MCF 10A (cell line): ENCODE measurements at regions of chr18 and their contacts with region 1.

Region 1: GRCh38 chr18:3380384-3380961 is 69.5 kb upstream of the TGIF1 start:
- DNase-seq: peak; percentile 74
- H3K4me3 Mint-ChIP-seq: no peak overlapping the region
- H3K27ac Mint-ChIP-seq: no peak overlapping the region
- H3K4me1 Mint-ChIP-seq: no peaks in the 10 kb centered on the region
- H3K27me3 Mint-ChIP-seq: no peaks in the 10 kb centered on the region
- CTCF ChIP-seq: peak; percentile 19

Region 2: DNA sequence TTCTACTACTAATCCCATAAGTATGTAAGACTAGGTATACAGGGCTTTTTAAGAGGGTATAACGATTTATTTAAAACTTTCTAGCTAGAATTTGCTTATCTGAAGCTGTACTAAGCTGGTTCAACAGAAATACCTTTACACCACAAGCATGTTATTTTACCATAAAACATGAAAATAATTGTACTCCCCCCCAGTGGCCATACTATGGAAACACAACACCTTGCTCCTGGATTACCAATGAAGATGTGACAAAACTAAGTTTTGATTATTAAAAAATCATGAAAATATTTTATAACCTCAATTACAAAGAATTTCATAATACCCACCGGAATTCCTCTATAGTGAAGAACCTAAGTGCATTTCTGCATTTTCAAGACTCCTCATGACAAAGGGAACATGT is 394.8 kb before region 1 on chr18:
- CTCF ChIA-PET with region 1: no interaction called
- POLR2A ChIA-PET with region 1: no interaction called
- intact Hi-C with region 1: no loop called
- DNase-seq: peak; percentile 52
- H3K4me3 Mint-ChIP-seq: no peak overlapping the region
- H3K27ac Mint-ChIP-seq: no peak overlapping the region
- H3K4me1 Mint-ChIP-seq: peaks cover 35% of the 10 kb centered on the region
- H3K27me3 Mint-ChIP-seq: no peaks in the 10 kb centered on the region
- CTCF ChIP-seq: peak; percentile 37

Region 3: DNA sequence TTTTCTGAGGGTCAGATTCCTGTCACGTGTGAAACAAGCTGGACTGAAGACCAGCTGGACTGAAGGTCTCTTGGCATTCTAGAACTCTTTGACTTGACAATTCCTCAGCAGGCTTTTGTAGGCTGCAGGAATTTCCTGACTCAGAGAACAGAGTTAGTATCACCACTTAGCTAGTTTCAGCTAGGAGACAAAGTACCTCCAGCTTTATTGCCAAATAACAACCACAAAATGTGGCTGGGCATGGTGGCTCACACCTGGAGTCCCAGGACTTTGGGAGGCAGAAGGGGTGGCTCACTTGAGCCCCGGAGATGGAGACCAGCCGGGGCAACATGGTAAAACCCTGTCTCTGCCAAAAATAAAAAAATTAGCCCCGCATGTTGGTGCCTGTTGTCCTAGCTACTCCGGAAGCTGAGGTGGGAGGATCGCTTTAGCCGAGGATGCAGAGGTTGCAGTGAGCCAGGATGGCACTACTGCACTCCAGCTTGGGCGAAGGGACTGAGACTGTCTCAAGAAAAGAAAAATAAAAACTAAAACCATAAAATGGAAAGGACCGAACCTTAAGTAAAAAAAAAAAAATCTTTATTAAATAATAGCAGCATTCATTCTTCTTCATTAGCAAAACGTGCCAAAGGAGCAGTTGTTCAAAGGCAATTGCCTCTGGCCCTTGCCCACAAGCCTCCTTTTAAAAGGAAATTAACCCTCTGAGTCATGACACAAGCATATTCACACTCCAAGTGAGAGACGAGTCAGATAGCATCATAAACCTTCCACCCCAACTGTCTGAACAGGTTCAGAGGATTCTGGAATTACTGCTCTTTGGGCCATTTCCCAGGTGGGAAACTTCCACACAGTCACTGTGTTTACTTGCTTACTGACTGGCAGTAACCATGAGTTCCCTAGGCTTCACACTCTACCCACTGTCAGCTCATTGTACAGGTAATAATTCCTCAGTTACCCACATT is 29.6 kb before region 1 on chr18:
- CTCF ChIA-PET with region 1: interaction called, 4 read pairs
- POLR2A ChIA-PET with region 1: interaction called, 10 read pairs
- intact Hi-C with region 1: no loop called
- DNase-seq: peak; percentile 73
- H3K4me3 Mint-ChIP-seq: no peak overlapping the region
- H3K27ac Mint-ChIP-seq: no peak overlapping the region
- H3K4me1 Mint-ChIP-seq: peaks cover 14% of the 10 kb centered on the region
- H3K27me3 Mint-ChIP-seq: no peaks in the 10 kb centered on the region
- CTCF ChIP-seq: no peak

Region 4: GRCh38 chr18:3493501-3494244 is 113.2 kb after region 1 on chr18:
- CTCF ChIA-PET with region 1: no interaction called
- POLR2A ChIA-PET with region 1: no interaction called
- intact Hi-C with region 1: no loop called
- DNase-seq: no peak
- H3K4me3 Mint-ChIP-seq: no peak overlapping the region
- H3K27ac Mint-ChIP-seq: no peak overlapping the region
- H3K4me1 Mint-ChIP-seq: no peaks in the 10 kb centered on the region
- H3K27me3 Mint-ChIP-seq: no peaks in the 10 kb centered on the region
- CTCF ChIP-seq: no peak